ENCODE measurements at regions of chr1 and their contacts with region 1.

Region 1: GRCh38 chr1:150532868-150533302 is 16.3 kb upstream of the ADAMTSL4 start:
- DNase-seq: no peak
- H3K4me3 ChIP-seq: peak overlapping the region; percentile 12 to 31
- H3K27ac ChIP-seq: peak overlapping the region; percentile 89 to 92
- H3K4me1 ChIP-seq: peaks cover 20 to 25% of the 10 kb centered on the region in 2 donors
- H3K27me3 ChIP-seq: no peaks in the 10 kb centered on the region
- CTCF ChIP-seq: no peak

Region 2: DNA sequence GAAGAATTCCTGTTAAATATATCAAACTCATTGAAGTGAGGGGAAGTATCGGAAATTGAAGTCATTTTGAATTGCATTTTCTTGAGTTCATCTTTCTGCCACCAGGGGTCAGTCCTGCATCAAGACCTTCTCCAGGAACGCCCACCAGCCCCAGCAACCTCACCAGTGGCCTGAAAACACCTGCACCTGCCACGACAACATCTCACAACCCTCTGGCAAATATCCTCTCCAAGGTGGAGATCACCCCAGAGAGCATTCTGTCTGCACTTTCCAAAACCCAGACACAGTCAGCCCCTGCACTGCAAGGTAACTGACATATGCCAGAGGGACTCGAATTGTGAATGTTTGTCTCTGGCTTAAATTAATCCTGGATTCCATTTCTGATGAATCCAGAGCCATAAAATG is 68.5 kb before region 1 on chr1:
- intact Hi-C with region 1: loop called (anchors 2 kb)
- DNase-seq: no peak
- H3K4me3 ChIP-seq: no peak overlapping the region
- H3K27ac ChIP-seq: no peak overlapping the region
- H3K4me1 ChIP-seq: no peaks in the 10 kb centered on the region
- H3K27me3 ChIP-seq: no peaks in the 10 kb centered on the region
- CTCF ChIP-seq: peak; percentile 70 to 82 (median 77)

Region 3: DNA sequence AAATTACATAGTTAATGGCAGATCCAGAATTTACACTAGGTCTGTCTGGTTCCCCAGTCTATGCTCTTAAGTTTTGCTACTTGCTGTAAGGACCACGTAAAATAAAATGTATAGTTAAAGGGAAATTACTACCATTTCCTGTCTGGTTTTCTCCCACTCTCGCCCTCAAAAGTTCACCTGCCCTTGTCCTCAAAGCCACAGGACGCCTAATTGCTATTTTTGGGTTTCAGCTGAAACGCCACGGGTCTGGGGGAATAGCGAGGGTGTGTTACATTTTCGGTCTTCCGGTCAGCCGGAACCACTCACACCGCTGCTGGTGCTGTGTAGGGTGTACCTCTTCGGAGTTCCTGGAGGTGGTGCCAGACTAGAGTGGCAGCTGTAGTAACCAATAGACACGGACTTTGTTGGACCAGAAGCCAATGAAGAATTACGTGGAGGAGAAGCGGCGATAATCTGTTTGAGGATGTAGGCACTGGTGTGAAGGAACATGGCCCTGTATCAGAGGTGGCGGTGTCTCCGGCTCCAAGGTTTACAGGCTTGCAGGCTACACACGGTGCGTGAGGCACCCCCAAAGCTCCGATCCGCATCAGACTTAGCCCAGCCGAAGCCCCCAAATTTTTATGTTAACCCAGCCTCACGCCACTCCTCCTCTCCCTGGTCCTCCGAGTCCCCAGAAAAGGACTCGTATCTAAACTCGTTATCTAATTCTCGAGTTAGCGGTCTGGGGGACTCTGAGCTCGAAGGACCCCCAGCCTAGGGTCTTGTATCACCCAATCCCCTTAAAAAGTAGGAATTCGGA is 45.7 kb before region 1 on chr1 and contains the start of gene TARS2:
- intact Hi-C with region 1: loop called (anchors 5 kb)
- DNase-seq: peak; percentile 91 to 99
- H3K4me3 ChIP-seq: peak within 1 kb of the TSS; percentile 70 to 73
- H3K27ac ChIP-seq: peak within 1 kb of the TSS; percentile 33 to 73
- H3K4me1 ChIP-seq: peaks cover 0 to 6% of the 10 kb centered on the region in 2 donors
- H3K27me3 ChIP-seq: no peaks in the 10 kb centered on the region
- CTCF ChIP-seq: peak; percentile 6 to 44 (median 27)
- total RNA-seq, gene TARS2: 10.9 TPM

Region 4: GRCh38 chr1:150515328-150516048 is 17.4 kb before region 1 on chr1 and contains the start of gene FALEC:
- intact Hi-C with region 1: loop called (anchors 1 kb)
- DNase-seq: peak; percentile 89 to 98
- H3K4me3 ChIP-seq: peak within 1 kb of the TSS; percentile 64 to 65
- H3K27ac ChIP-seq: peak within 1 kb of the TSS; percentile 55 to 84
- H3K4me1 ChIP-seq: peaks cover 0 to 9% of the 10 kb centered on the region in 2 donors
- H3K27me3 ChIP-seq: no peaks in the 10 kb centered on the region
- CTCF ChIP-seq: peak; percentile 2 to 13 (median 4)
- total RNA-seq, gene FALEC: not detected

Region 5: DNA sequence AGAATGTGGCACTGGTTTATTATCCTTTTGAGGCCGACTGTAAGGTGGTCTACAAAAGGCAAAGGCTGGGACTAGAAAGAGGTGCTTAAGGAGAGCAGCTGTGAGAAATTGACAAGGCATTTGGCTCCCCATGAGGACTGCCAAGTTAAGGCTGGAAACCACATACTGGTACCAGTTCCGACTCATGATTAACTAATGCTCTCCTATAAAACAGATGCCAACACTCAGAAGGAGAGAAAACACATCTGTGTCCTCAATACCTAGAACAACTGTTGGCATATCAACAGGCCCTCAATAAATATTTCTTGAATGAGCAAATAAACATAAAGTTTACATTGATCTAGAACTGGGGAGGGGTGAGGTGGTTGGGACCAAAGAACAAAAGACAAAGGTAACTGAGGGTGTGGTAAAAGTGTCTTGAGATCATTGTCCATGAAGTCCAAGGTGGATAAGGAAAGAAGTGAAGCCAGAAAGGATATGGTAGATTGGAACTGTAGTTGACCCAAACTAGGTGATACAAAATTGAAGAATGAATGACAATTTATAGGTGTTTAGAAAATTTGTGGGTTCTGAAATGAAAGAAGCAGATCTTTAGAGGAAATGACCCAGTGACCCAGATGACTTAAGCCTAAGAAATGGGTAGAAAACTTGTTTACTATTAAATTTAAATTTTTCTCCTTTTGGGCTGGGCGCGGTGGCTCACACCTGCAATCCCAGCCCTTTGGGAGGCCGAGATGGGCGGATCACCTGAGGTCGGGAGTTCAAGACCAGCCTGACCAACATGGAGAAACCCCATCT is 63.4 kb after region 1 on chr1:
- intact Hi-C with region 1: no loop called
- DNase-seq: no peak
- H3K4me3 ChIP-seq: no peak overlapping the region
- H3K27ac ChIP-seq: no peak overlapping the region
- H3K4me1 ChIP-seq: no peaks in the 10 kb centered on the region
- H3K27me3 ChIP-seq: no peaks in the 10 kb centered on the region
- CTCF ChIP-seq: no peak